ENCODE measurements at regions of chr11 and their contacts with region 1.

Region 1: DNA sequence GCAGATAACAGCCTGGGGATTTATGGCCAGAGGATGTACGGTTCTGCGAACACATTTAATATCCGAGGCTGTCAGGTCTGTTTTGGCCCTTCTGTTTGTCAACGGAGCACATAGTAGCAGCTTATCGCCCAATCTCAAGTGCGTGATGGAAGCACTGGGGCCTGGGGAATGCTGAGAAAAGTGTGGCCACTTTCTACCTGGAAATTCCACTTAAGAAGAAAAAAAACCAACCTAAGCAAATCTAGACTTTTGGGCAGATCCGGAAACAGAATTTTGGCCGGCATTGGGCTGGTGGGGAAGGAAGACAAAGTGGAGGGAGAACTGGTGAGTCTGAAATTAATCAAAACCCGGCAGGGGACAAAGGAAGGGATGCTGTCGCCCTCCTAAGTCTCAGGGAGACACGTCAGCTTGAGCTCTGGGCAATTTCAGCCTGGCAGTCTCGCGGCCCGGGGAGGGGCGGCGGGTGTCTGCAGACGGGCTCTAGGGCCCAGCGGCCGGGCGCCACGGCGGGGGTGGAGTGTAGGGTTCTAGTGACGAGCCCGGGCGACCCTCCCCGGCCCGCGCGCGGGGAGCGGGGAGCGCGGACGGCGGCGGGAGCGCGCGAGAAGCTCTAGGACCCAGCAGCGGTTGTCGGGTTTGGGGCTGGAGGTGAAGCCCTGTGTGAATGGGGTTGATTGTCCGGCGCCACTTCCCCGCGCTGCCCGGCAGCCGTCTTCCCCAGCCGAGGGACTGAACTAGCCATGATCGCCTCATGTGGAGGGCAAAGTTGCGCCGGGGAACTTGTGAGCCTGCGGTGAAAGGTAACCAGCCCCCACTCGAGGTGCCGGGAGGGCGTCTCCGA is at the start of gene AMOTL1:
- DNase-seq: peak; percentile 90
- ATAC-seq: peak; percentile 45 to 69
- H3K4me3 ChIP-seq: peak within 1 kb of the TSS; percentile 91 to 97 (median 94)
- H3K27ac ChIP-seq: peak within 1 kb of the TSS; percentile 96 to 98 (median 98)
- H3K4me1 ChIP-seq: peaks cover 35 to 46% of the 10 kb centered on the region in 2 donors
- H3K27me3 ChIP-seq: no peaks in the 10 kb centered on the region
- CTCF ChIP-seq: peak in 2 of 5 experiments; percentile 12 to 23
- POLR2A ChIP-seq: peak; percentile 83 to 93
- total RNA-seq, gene AMOTL1: 150 to 393 (median 244) TPM

Region 2: GRCh38 chr11:94543695-94544645 is 224.0 kb before region 1 on chr11 and contains the start of gene FUT4:
- in situ Hi-C with region 1: no loop called
- intact Hi-C with region 1: no loop called
- DNase-seq: peak; percentile 74 to 77
- ATAC-seq: peak; percentile 89 to 91
- H3K4me3 ChIP-seq: peak within 1 kb of the TSS; percentile 70 to 86 (median 82)
- H3K27ac ChIP-seq: peak within 1 kb of the TSS; percentile 84 to 93 (median 92)
- H3K4me1 ChIP-seq: peaks cover 0 to 10% of the 10 kb centered on the region in 2 donors
- H3K27me3 ChIP-seq: no peaks in the 10 kb centered on the region
- CTCF ChIP-seq: no peak
- POLR2A ChIP-seq: peak; percentile 45 to 57
- total RNA-seq, gene FUT4: 0.92 to 1.9 (median 1.5) TPM

Region 3: GRCh38 chr11:94741022-94741679 is 26.8 kb before region 1 on chr11:
- in situ Hi-C with region 1: no loop called
- intact Hi-C with region 1: loop called (anchors 2 kb)
- DNase-seq: peak in 1 of 2 donors; percentile 45
- ATAC-seq: peak; percentile 91 to 96
- H3K4me3 ChIP-seq: peak overlapping the region; percentile 59 to 70 (median 66)
- H3K27ac ChIP-seq: peak overlapping the region; percentile 46 to 75 (median 74)
- H3K4me1 ChIP-seq: peaks cover 30 to 34% of the 10 kb centered on the region in 2 donors
- H3K27me3 ChIP-seq: no peaks in the 10 kb centered on the region
- CTCF ChIP-seq: peak; percentile 37 to 69 (median 61)
- POLR2A ChIP-seq: no peak

Region 4: DNA sequence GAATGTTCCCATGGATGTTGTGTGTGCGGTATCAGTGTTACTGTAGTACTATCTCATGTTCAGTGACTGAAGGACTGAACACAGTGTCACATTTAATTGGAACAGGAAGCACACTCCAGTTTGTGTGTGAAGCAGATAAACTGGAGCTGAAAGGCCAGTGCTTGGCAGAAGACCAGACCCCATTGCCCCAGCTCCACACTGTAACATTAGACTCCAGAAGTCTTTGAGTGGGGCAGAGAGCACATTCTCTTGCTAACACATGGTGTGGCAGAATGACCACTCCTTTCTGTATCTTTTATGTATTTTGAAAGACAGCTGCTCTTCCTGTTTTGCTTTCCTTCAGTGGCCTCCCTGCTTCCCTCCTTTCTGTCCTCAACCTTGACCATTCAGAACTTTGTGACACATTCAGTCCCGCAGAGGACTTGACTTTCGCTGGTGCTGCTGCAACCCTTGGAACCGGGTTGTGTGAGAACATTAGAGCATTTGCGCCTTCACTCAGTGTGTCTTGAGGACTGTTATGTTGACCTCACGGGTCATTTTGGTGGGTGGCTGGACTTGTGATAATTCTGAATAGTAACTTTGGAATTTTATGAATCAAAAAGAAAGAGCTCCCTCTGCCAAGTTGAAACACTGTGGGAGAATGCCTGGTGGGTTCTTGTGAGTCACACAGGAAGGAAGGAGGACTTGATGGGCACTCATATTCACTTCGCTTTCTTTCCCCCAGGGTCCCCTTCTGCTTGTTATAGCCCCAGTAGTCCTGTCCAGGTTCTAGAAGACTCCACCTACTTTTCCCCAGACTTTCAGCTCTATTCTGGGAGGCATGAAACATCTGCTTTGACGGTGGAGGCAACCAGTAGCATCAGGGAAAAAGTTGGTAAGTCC is 26.5 kb after region 1 on chr11:
- in situ Hi-C with region 1: no loop called
- intact Hi-C with region 1: loop called (anchors 2 kb)
- DNase-seq: peak; percentile 88 to 93
- ATAC-seq: peak; percentile 80 to 87
- H3K4me3 ChIP-seq: peak overlapping the region; percentile 26 to 46 (median 35)
- H3K27ac ChIP-seq: peak overlapping the region; percentile 89 to 91 (median 90)
- H3K4me1 ChIP-seq: peaks cover 88 to 89% of the 10 kb centered on the region in 2 donors
- H3K27me3 ChIP-seq: no peaks in the 10 kb centered on the region
- CTCF ChIP-seq: no peak
- POLR2A ChIP-seq: peak; percentile 6 to 36

Region 5: DNA sequence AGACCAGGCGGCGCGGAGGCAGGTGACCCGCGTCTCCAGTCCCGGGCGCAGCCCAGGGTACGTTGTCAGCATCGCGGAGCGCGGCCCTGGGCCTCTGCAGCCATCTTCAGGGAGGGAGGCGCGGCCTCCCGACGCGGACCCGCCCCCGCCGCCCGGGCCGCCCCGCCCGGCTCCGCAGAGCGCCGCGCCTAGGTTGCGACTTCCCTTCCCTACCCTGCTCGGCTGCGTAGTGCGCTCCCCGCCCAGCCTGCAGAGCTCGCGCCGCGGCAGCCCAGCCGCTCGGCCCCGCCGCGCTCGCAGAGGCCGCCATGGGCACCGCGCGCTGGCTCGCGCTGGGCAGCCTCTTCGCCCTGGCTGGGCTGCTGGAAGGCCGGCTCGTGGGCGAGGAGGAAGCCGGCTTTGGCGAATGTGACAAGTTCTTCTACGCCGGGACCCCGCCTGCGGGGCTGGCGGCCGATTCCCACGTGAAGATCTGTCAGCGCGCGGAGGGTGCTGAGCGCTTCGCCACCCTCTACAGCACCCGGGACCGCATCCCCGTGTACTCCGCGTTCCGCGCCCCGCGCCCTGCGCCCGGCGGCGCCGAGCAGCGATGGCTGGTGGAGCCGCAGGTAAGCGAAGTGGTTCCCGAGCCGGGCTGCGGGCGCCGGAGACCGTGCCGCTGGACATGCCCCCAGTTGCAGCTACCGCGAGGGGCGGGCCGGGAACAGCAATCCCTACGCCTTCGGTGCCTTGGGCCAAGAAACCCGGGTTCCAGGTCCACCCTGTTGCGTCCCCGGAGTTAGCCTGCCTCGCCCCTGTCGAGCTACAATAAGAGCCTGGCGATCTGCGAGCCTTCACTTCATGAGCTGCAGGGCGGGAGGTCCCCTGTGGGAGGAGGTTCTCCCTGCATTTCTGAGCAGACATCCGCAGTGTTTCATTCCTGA is 321.9 kb after region 1 on chr11 and contains the start of gene ENDOD1:
- in situ Hi-C with region 1: loop called in 1 of 4 experiments (anchors 25 kb)
- intact Hi-C with region 1: loop called (anchors 10 kb)
- DNase-seq: peak; percentile 59 to 72
- ATAC-seq: peak; percentile 86 to 87
- H3K4me3 ChIP-seq: peak within 1 kb of the TSS; percentile 69 to 97 (median 74)
- H3K27ac ChIP-seq: peak within 1 kb of the TSS; percentile 84 to 97 (median 89)
- H3K4me1 ChIP-seq: peaks cover 38 to 42% of the 10 kb centered on the region in 2 donors
- H3K27me3 ChIP-seq: no peaks in the 10 kb centered on the region
- CTCF ChIP-seq: peak in 4 of 5 experiments; percentile 11 to 26 (median 16)
- POLR2A ChIP-seq: peak; percentile 84 to 88
- total RNA-seq, gene ENDOD1: 17.5 to 35.2 (median 27.6) TPM

Measured in gastrocnemius medialis (tissue), 4 donors.